ENCODE measurements at regions of chr18 and their contacts with region 1.

Region 1: GRCh38 chr18:57621246-57621604 is 411 bp downstream of the NARS1 start:
- DNase-seq: no peak
- ATAC-seq: peak; percentile 4 to 57 (median 49)
- H3K4me3 ChIP-seq: peak overlapping the region; percentile 60 to 93 (median 84)
- H3K27ac ChIP-seq: peak overlapping the region; percentile 58 to 96 (median 88)
- H3K4me1 ChIP-seq: peaks cover 0 to 38% (median 17%) of the 10 kb centered on the region in 12 donors
- H3K27me3 ChIP-seq: no peaks in the 10 kb centered on the region
- CTCF ChIP-seq: no peak
- POLR2A ChIP-seq: no peak

Region 2: DNA sequence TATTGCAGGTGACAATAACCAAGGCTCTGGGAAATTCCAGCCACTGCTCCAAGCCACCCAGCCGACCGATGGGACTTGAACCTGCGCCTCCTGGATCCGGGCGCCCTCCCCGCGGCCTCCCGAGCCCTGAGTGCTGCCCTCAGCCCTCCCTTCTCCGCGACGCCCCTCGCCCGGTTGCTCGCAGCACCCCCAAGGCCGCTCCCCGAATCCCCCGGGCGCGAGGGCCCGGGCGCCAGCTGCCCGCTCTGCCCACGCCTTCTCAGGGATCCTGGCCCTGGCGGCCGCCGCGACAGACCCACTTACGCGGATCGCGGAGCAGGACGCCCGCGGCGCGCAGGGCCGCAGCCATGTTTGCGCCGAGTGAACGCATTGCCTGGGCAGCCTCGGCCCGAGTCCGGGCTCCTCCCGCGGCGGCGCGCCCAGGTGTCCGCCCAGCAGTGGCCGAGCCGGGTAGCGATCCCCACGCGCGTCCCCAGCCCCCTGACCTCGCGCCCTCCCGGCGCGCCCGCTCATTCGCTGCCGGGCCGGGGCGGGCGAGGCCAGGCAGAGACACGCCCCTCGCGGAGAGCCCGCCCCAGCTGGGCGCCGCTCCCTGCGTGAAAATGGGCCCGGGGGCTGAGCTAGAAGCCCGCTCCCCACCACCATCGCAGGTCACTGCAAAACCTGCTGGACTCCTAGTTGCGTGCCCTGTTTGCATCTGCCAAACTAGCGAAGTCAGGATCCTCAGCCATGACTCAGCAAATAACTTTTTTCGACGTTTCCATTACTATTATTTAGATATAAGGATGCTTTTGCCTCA is 34.8 kb before region 1 on chr18 and contains the start of gene FECH:
- intact Hi-C with region 1: loop called in 2 of 10 experiments (anchors 2 to 5 kb)
- DNase-seq: peak; percentile 88 to 94 (median 91)
- ATAC-seq: peak; percentile 96 to 99 (median 98)
- H3K4me3 ChIP-seq: peak within 1 kb of the TSS; percentile 65 to 99 (median 89)
- H3K27ac ChIP-seq: peak within 1 kb of the TSS; percentile 59 to 94 (median 86)
- H3K4me1 ChIP-seq: peaks cover 0 to 26% (median 11%) of the 10 kb centered on the region in 12 donors
- H3K27me3 ChIP-seq: no peaks in the 10 kb centered on the region
- CTCF ChIP-seq: peak in 5 of 12 donors; percentile 6 to 19 (median 15)
- POLR2A ChIP-seq: peak in 1 of 2 donors; percentile 96
- total RNA-seq, gene FECH: 29.0 to 93.3 (median 50.7) TPM

Measured in heart left ventricle (tissue), 16 donors.